ENCODE measurements at regions of chr3 and their contacts with region 1.

Region 1: DNA sequence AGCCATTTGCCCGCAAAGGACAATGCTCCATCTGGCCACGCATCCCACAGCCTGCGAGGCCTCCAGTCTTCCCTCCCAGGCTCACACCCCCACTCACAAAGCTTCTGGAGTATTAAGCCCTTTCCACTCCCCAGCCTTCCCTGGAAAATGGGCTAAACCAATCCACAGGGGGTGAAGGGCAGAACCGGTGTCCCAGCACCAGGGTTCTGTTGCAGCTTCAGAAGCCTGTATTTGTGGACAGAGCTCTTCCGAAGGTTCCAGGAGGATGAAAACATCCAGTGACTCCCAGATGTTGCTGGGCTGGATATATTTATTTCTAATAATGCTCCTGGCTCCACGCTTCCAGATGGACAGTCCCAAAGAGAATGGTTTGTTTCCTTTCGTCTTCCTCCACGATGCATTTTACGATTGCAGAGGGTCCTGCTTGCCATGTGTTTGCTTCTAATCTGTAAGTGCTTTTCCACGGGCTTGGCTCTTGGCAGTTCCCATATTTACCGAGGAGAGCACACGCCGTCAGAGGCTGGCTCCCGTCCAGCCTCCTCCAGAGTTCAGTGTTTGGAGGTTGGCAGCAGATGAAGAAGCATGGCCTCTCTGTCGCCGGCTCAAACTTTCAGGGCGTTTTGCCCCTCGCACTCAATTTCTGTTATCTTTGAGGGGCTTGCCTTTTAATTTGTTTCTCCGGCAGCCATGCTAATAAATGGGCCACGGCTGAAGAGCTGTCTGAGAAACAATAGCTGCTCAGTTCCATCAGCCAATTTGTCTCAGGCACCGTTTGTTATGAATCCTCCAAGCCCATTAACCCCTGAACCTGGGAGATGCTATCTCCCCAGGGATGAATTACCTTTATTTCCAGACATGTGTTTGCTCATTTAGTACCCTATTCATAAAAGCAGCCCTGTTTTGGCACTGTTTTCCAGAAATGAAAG is 367.9 kb upstream of the PROK2 start:
- DNase-seq: peak; percentile 81 to 88
- ATAC-seq: peak; percentile 81
- H3K4me3 ChIP-seq: no peak overlapping the region
- H3K27ac ChIP-seq: no peak overlapping the region
- H3K4me1 ChIP-seq: peaks cover 0 to 8% of the 10 kb centered on the region in 2 donors
- H3K27me3 ChIP-seq: no peaks in the 10 kb centered on the region

Region 2: GRCh38 chr3:72031581-72031980 is 121.2 kb before region 1 on chr3:
- intact Hi-C with region 1: no loop called
- DNase-seq: peak in 1 of 2 donors; percentile 68
- ATAC-seq: no peak
- H3K4me3 ChIP-seq: no peak overlapping the region
- H3K27ac ChIP-seq: no peak overlapping the region
- H3K4me1 ChIP-seq: peaks cover 0 to 2% of the 10 kb centered on the region in 2 donors
- H3K27me3 ChIP-seq: no peaks in the 10 kb centered on the region

Region 3: GRCh38 chr3:72109327-72110259 is 43.2 kb before region 1 on chr3:
- intact Hi-C with region 1: loop called in 1 of 2 experiments (anchors 5 kb)
- DNase-seq: no peak
- ATAC-seq: no peak
- H3K4me3 ChIP-seq: no peak overlapping the region
- H3K27ac ChIP-seq: no peak overlapping the region
- H3K4me1 ChIP-seq: no peaks in the 10 kb centered on the region
- H3K27me3 ChIP-seq: no peaks in the 10 kb centered on the region

Region 4: GRCh38 chr3:72123908-72124441 is 28.8 kb before region 1 on chr3:
- intact Hi-C with region 1: loop called in 1 of 2 experiments (anchors 2 kb)
- DNase-seq: peak in 1 of 2 donors; percentile 75
- ATAC-seq: peak; percentile 87
- H3K4me3 ChIP-seq: no peak overlapping the region
- H3K27ac ChIP-seq: peak overlapping the region in 1 of 2 donors; percentile 22
- H3K4me1 ChIP-seq: peaks cover 4 to 14% of the 10 kb centered on the region in 2 donors
- H3K27me3 ChIP-seq: no peaks in the 10 kb centered on the region

Region 5: DNA sequence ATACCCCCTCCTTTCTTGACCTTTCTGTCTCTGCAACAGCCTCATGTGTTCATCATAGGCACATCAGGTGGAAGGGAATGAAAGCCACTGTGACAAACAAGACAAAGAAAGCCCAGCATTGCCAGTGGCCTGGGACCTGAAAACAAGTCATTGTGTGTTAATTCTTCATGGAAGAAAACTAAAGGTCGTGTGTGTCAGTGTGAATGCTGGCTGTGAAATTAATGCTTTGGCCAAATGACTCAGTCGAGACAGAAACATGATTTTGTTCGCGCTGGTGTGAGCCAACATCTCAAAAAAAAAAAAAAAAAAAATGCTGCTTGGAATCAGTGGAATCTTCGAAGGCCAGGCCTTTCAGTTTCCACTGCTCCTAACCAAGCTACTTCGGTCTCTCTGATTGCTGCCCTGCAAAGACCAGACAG is 18.7 kb after region 1 on chr3:
- intact Hi-C with region 1: loop called in 1 of 2 experiments (anchors 1 kb)
- DNase-seq: no peak
- ATAC-seq: peak; percentile 70
- H3K4me3 ChIP-seq: no peak overlapping the region
- H3K27ac ChIP-seq: peak overlapping the region; percentile 10 to 99
- H3K4me1 ChIP-seq: peaks cover 8 to 19% of the 10 kb centered on the region in 2 donors
- H3K27me3 ChIP-seq: no peaks in the 10 kb centered on the region

Region 6: DNA sequence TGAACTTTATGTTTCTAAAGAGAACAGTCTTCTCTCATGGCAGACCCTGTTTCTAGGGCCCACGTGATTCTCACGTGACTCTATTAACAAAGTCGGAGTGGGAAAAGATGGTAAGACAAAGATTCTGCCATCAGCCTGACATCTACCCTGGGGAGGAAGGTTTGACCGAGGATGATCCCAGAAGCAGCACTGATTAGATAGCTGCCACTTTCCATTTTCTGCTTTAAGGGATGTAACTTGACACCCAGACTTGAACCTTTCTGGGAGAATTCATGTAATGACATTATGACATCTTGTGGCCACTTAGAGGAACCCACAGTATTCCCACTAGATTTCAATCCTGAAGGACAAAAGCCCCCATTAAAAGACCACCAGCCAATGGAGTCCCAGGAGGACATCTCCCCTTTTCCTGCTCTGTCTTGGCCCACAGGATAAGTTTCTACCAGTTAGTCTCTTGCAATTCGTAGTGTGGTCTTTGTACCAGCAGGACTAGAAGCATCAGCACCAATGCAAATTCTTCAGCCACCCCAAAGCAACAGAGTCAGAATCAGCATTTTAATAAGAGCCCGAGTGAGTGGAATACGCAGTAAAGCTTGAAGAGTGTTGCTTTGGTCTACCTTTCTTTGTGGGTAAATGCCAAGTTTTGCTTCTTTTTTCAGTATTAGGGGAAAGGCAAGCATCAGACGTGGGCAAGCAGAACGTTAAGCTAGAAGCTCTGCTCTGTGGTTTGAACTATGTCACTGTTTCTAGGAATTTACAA is 112.6 kb after region 1 on chr3:
- intact Hi-C with region 1: no loop called
- DNase-seq: no peak
- ATAC-seq: no peak
- H3K4me3 ChIP-seq: no peak overlapping the region
- H3K27ac ChIP-seq: no peak overlapping the region
- H3K4me1 ChIP-seq: peaks cover 0 to 4% of the 10 kb centered on the region in 2 donors
- H3K27me3 ChIP-seq: no peaks in the 10 kb centered on the region

Region 7: GRCh38 chr3:72353236-72354128 is 200.7 kb after region 1 on chr3:
- intact Hi-C with region 1: no loop called
- DNase-seq: no peak
- ATAC-seq: no peak
- H3K4me3 ChIP-seq: no peak overlapping the region
- H3K27ac ChIP-seq: no peak overlapping the region
- H3K4me1 ChIP-seq: no peaks in the 10 kb centered on the region
- H3K27me3 ChIP-seq: no peaks in the 10 kb centered on the region

Measured in aorta (tissue), 5 donors.